CD14-positive monocyte (primary cell): ENCODE measurements at regions of chr6 and their contacts with region 1.

Region 1: GRCh38 chr6:137767911-137768690 is 99.0 kb upstream of the TNFAIP3 start:
- DNase-seq: peak; percentile 76 to 85 (median 81)
- H3K4me3 ChIP-seq: peak overlapping the region in 1 of 3 experiments; percentile 36
- H3K4me3 Mint-ChIP-seq: peak overlapping the region in 1 of 2 donors; percentile 85
- H3K27ac ChIP-seq: peak overlapping the region in 1 of 2 donors; percentile 72
- H3K27ac Mint-ChIP-seq: peak overlapping the region; percentile 88 to 96 (median 94)
- H3K4me1 ChIP-seq: peaks cover 28 to 32% of the 10 kb centered on the region in 2 donors
- H3K4me1 Mint-ChIP-seq: peaks cover 33% of the 10 kb centered on the region
- H3K27me3 ChIP-seq: no peaks in the 10 kb centered on the region
- H3K27me3 Mint-ChIP-seq: peaks cover 0 to 3% (median 0%) of the 10 kb centered on the region in 3 donors
- CTCF ChIP-seq: no peak

Region 2: DNA sequence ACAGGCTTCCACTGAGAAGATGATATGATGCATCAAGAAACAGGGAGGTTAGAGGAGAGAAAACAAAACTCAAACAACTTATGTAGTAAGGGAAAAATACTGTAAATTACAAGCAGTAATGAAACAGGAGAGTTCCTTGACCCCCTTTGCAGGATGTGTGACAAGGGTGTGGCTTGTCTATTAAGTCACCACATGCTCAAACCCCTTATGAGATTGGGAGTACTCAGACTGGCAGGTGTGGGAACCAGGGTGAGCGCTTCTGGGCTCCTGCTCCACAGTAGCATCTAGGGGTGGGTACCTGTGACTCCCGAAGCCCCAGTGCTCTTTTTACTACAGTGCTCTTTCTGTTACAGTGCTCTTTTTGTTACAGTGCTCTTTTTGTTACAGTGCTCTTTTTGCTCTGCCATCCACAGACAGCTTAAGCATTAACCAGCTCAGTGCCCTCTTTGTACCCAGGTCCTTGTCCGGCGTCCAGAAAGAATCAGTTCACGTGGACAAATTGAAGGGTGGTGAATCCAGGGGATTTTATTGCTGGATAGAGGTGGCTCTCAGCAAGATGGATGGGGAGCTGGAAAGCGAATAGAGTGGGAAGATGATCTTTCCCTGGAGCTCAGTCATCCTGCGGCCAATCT is 302.6 kb before region 1 on chr6:
- intact Hi-C with region 1: no loop called
- DNase-seq: no peak
- H3K4me3 ChIP-seq: no peak overlapping the region
- H3K4me3 Mint-ChIP-seq: peak overlapping the region in 1 of 2 donors; percentile 17
- H3K27ac ChIP-seq: no peak overlapping the region
- H3K27ac Mint-ChIP-seq: peak overlapping the region in 1 of 7 donors; percentile 21
- H3K4me1 ChIP-seq: no peaks in the 10 kb centered on the region
- H3K4me1 Mint-ChIP-seq: no peaks in the 10 kb centered on the region
- H3K27me3 ChIP-seq: peaks cover 14 to 17% of the 10 kb centered on the region in 2 donors
- H3K27me3 Mint-ChIP-seq: peaks cover 14 to 46% (median 29%) of the 10 kb centered on the region in 3 donors
- CTCF ChIP-seq: no peak

Region 3: GRCh38 chr6:137717074-137718073 is 50.7 kb before region 1 on chr6:
- intact Hi-C with region 1: loop called in 1 of 2 experiments (anchors 10 kb)
- DNase-seq: no peak
- H3K4me3 ChIP-seq: no peak overlapping the region
- H3K4me3 Mint-ChIP-seq: no peak overlapping the region
- H3K27ac ChIP-seq: no peak overlapping the region
- H3K27ac Mint-ChIP-seq: peak overlapping the region in 1 of 7 donors; percentile 24
- H3K4me1 ChIP-seq: peaks cover 23 to 30% of the 10 kb centered on the region in 2 donors
- H3K4me1 Mint-ChIP-seq: peaks cover 29% of the 10 kb centered on the region
- H3K27me3 ChIP-seq: no peaks in the 10 kb centered on the region
- H3K27me3 Mint-ChIP-seq: peaks cover 0 to 1% (median 0%) of the 10 kb centered on the region in 3 donors
- CTCF ChIP-seq: no peak

Region 4: DNA sequence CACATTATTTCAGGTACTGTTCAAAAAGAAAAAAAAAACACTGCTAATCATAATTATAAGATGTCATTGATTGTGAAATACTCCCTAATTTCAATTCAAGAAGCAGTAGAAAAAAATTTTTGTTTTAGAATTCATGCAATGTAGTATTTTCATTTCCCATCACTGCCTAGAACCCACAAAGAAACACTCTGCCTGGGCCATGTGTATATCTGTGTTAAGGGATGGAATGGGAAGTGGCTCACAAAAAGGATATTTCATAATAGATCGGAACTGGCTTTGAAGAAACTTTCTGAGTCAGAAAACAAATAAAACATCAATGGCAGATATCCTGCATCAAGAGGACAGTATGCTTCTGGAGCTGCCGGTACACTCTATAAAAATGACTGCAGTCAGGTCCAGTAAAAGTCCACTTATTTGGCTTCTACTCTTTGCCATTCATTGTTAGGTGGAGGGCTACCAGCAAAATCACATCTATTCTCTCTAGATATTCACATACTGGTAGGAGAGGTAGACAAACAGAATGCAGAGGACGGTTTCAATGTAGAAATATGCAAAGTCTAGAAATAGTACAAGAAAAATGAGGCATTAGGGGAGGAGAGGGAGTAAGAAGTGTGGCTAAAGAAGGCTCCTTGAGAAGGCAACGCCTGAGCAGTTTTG is 36.0 kb before region 1 on chr6:
- intact Hi-C with region 1: loop called in 1 of 2 experiments (anchors 5 kb)
- DNase-seq: peak; percentile 69 to 86 (median 84)
- H3K4me3 ChIP-seq: peak overlapping the region in 1 of 3 experiments; percentile 34
- H3K4me3 Mint-ChIP-seq: peak overlapping the region in 1 of 2 donors; percentile 65
- H3K27ac ChIP-seq: peak overlapping the region in 1 of 2 donors; percentile 48
- H3K27ac Mint-ChIP-seq: peak overlapping the region; percentile 73 to 93 (median 85)
- H3K4me1 ChIP-seq: peaks cover 73 to 88% of the 10 kb centered on the region in 2 donors
- H3K4me1 Mint-ChIP-seq: peaks cover 74% of the 10 kb centered on the region
- H3K27me3 ChIP-seq: no peaks in the 10 kb centered on the region
- H3K27me3 Mint-ChIP-seq: no peaks in the 10 kb centered on the region
- CTCF ChIP-seq: no peak

Region 5: GRCh38 chr6:137811121-137811915 is 43.2 kb after region 1 on chr6:
- intact Hi-C with region 1: loop called in 1 of 2 experiments (anchors 5 kb)
- DNase-seq: peak; percentile 98 to 100 (median 99)
- H3K4me3 ChIP-seq: peak overlapping the region in 1 of 3 experiments; percentile 10
- H3K4me3 Mint-ChIP-seq: peak overlapping the region; percentile 20 to 81
- H3K27ac ChIP-seq: peak overlapping the region; percentile 80 to 97
- H3K27ac Mint-ChIP-seq: peak overlapping the region; percentile 98 to 99 (median 99)
- H3K4me1 ChIP-seq: peaks cover 29 to 33% of the 10 kb centered on the region in 2 donors
- H3K4me1 Mint-ChIP-seq: peaks cover 27% of the 10 kb centered on the region
- H3K27me3 ChIP-seq: no peaks in the 10 kb centered on the region
- H3K27me3 Mint-ChIP-seq: peaks cover 0 to 1% (median 0%) of the 10 kb centered on the region in 3 donors
- CTCF ChIP-seq: no peak

Region 6: GRCh38 chr6:138588805-138589434 is 820.8 kb after region 1 on chr6:
- intact Hi-C with region 1: loop called in 1 of 2 experiments (anchors 5 kb)
- DNase-seq: peak; percentile 61 to 71 (median 65)
- H3K4me3 ChIP-seq: no peak overlapping the region
- H3K4me3 Mint-ChIP-seq: no peak overlapping the region
- H3K27ac ChIP-seq: no peak overlapping the region
- H3K27ac Mint-ChIP-seq: no peak overlapping the region
- H3K4me1 ChIP-seq: peaks cover 17 to 18% of the 10 kb centered on the region in 2 donors
- H3K4me1 Mint-ChIP-seq: peaks cover 20% of the 10 kb centered on the region
- H3K27me3 ChIP-seq: peaks cover 0 to 12% of the 10 kb centered on the region in 2 donors
- H3K27me3 Mint-ChIP-seq: peaks cover 12 to 20% (median 13%) of the 10 kb centered on the region in 3 donors
- CTCF ChIP-seq: peak; percentile 92